Right ventricle myocardium inferior (tissue), 1 donor: ENCODE measurements at regions of chr15 and their contacts with region 1.

Region 1: GRCh38 chr15:93485438-93486327 is 396.7 kb upstream of the RGMA start:
- DNase-seq: no peak
- ATAC-seq: peak; percentile 91

Region 2: DNA sequence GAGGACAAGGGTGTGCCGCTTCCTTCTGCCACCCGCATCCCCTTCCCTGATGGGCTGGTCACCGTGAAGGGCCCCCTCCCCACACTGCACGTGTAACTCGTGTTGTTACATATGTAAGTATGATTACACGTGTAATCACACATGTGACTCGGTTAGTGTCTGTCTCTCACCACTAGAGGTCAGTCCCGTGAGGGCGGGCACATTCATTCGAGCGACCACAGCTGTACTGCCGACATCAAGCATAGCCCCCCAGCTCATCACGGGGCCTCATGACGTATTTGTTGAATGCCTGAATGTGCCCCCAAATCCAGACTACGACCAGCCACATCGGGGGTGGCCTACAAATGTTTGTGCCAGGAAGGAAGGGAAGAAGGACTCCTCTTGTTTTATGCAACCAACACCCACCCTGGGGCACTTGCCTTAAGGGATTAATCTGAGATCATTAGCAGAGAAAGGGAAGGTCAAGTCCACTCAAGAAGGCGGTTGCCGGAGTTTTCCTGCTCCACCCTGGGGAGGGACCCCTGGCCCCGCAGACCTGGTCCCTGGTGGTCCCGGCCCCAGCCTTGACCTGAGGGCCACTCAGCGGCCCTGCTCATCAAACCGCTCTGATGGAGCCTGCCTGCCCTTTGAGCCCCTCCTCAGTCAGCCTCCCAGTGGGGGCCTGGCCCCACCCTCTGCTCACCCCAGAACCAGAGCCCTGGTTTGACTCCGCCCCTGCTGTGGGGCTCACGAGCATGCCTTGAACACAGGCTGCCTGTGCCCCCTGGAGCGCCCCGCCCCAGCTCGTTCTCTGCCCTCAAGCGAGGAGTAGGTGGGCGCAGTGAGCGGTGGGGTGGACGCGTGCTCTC is 449.5 kb before region 1 on chr15:
- intact Hi-C with region 1: loop called (anchors 5 kb)
- DNase-seq: no peak
- ATAC-seq: no peak

Region 3: GRCh38 chr15:93449798-93450197 is 35.9 kb before region 1 on chr15:
- intact Hi-C with region 1: no loop called
- DNase-seq: no peak
- ATAC-seq: no peak

Region 4: GRCh38 chr15:93987111-93987467 is 501.4 kb after region 1 on chr15:
- intact Hi-C with region 1: loop called (anchors 10 kb)
- DNase-seq: no peak
- ATAC-seq: no peak

Region 5: GRCh38 chr15:94119923-94120775 is 634.5 kb after region 1 on chr15:
- intact Hi-C with region 1: loop called (anchors 10 kb)
- DNase-seq: no peak
- ATAC-seq: peak; percentile 96